ENCODE measurements at regions of chr15 and their contacts with region 1.

Region 1: GRCh38 chr15:40338041-40338657 is 2.6 kb downstream of the CCDC9B start:
- DNase-seq: peak; percentile 66 to 72
- ATAC-seq: peak; percentile 41 to 69; a peak in 4 of 6 replicates
- H3K4me3 ChIP-seq: 0 out of 3 replicates have a peak overlapping the region, but pooled peaks have one; percentile 47
- H3K27ac ChIP-seq: peak overlapping the region; percentile 94 to 96
- H3K4me1 ChIP-seq: peaks cover 39% of the 10 kb centered on the region
- CTCF ChIP-seq: peak; percentile 68
- EP300 ChIP-seq: no peak
- POLR2A ChIP-seq: no peak
- RAD21 ChIP-seq: peak; percentile 53 to 59

Region 2: GRCh38 chr15:40029979-40030893 is 307.9 kb before region 1 on chr15:
- CTCF ChIA-PET with region 1: no interaction called
- POLR2A ChIA-PET with region 1: no interaction called
- DNase-seq: peak in 1 of 2 experiments; percentile 30
- ATAC-seq: peak; percentile 64 to 83; a peak in 4 of 6 replicates
- H3K4me3 ChIP-seq: no peak overlapping the region
- H3K27ac ChIP-seq: no peak overlapping the region
- H3K4me1 ChIP-seq: no peaks in the 10 kb centered on the region
- CTCF ChIP-seq: peak; percentile 39; the same call in 2 of the 3 replicates
- EP300 ChIP-seq: no peak
- POLR2A ChIP-seq: no peak
- RAD21 ChIP-seq: peak in 1 of 2 experiments; percentile 29; a peak in 2 of 5 replicates

Region 3: DNA sequence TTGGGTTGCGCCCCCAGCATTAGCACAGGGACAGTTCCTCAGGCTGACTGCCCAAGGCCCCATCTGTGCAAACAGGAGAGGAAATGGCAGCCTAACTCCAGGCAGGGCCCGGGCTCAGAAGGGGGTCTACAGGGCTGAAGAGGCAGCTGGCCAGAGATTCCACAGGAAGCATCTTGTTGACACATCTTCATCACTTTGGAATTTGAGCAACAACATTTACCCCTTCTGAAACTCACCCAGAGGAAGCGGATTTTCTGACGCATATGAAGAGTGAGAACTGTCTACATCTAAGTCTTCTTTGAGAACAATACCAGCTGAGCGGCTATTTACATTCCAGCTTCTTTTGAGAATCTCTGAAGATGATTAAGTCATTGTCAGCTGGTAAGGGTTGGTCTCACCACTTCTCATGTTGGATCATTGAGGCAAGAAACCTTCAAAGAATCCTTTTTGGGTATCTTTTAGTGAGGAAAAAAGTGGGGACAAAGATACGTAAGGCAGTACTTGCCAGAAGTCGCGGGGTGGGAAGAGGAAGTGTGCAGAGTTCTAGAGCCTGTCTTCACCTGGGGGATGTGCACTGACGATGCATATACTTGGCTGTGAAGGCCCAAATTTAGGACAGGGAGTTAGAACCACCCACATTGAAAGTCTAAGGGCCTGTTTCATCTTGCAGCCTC is 273.8 kb before region 1 on chr15:
- CTCF ChIA-PET with region 1: no interaction called
- POLR2A ChIA-PET with region 1: no interaction called
- DNase-seq: peak in 1 of 2 experiments; percentile 73
- ATAC-seq: peak; percentile 47 to 53; a peak in 4 of 6 replicates
- H3K4me3 ChIP-seq: no peak overlapping the region
- H3K27ac ChIP-seq: peak overlapping the region; percentile 70 to 83
- H3K4me1 ChIP-seq: peaks cover 56% of the 10 kb centered on the region
- CTCF ChIP-seq: no peak
- EP300 ChIP-seq: peak; percentile 38 to 40; a peak in 2 of 5 replicates
- POLR2A ChIP-seq: no peak
- RAD21 ChIP-seq: no peak

Region 4: DNA sequence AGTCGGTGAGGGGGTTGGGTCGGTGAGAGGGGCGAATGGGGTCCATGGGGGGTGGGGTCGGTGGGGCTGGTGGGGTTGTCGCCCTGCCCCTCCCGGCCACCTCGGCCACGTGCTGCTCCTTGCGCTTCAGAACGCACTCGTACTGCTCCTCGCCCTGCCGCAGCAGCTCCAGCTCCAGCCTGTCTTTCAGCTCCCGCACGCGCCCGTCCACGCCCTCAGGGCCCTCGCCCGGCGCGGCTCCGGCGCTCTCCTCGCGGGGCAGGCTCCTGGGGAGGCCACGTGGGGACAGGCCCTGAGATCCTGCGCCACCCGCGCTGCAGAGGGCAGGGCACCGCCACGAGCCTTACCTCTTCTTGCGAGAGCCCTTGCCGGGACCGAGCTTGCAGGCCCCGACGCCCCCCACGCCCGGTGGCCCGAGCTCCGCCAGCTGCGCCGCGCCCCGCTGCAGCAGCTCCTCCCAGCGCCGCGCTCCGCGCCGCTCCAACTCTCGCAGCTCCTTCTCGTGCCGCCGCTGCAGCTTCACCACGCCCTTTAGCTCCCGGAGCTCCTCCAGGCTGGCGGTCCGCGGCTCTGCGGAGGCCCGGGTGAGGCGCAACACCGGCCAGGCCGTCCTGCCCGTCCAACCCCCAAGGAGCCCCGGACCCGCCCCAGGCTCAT is 47.1 kb before region 1 on chr15:
- CTCF ChIA-PET with region 1: interaction called, 17 read pairs
- POLR2A ChIA-PET with region 1: interaction called, 3 read pairs
- DNase-seq: peak; percentile 31 to 38
- ATAC-seq: peak; percentile 67 to 82
- H3K4me3 ChIP-seq: peak overlapping the region; percentile 34
- H3K27ac ChIP-seq: peak overlapping the region; percentile 61 to 87; a peak in 5 of 6 replicates
- H3K4me1 ChIP-seq: peaks cover 11% of the 10 kb centered on the region; the same call in 2 of the 3 replicates
- CTCF ChIP-seq: no peak
- EP300 ChIP-seq: no peak
- POLR2A ChIP-seq: no peak
- RAD21 ChIP-seq: no peak

Region 5: DNA sequence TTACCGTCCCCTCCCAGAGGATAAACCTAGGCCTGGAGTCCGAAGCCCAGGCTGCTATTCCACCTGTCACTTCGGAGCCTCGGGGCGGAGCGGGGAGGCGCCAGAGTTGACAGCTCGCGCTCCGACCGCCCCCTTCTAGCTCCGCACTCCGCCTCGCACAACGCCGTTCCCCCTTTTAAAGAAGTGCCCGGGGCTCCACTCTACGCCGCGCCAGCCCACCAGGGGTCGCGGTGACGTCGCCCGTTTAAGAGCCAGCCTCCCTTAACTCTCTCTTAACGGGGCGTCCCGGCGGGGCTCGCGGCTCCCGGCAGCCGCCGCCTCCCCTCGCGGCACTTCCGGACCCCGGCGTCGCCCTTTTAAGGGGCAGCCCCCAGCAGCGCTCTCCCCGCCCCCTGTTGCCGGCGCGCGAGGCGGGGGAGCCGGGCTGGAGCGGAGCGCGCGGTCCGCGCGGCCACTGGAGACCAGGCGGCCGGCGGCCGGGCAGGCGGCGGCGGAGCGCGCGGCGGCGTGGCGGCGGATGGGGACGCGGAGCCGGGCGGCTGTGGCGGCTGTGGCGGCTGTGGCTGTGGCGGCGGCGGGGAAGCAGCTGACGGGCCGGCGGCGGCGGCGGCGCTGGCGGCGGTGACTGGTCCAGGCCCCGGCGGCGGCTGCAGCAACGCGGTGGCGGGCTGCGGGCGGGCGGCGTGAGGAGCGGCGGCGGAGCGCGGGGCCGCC is 14.8 kb before region 1 on chr15 and contains the start of gene INAFM2:
- CTCF ChIA-PET with region 1: interaction called, 139 read pairs
- POLR2A ChIA-PET with region 1: interaction called, 20 read pairs
- DNase-seq: peak; percentile 66 to 77
- ATAC-seq: peak; percentile 74 to 92
- H3K4me3 ChIP-seq: peak within 1 kb of the TSS; percentile 75
- H3K27ac ChIP-seq: peak within 1 kb of the TSS; percentile 73 to 90
- H3K4me1 ChIP-seq: peaks cover 9% of the 10 kb centered on the region; the same call in 1 of the 3 replicates
- CTCF ChIP-seq: peak; percentile 21; the same call in 2 of the 3 replicates
- EP300 ChIP-seq: no peak
- POLR2A ChIP-seq: 0 out of 2 replicates have a peak, but pooled peaks have one; percentile 17
- RAD21 ChIP-seq: no peak
- polyA plus RNA-seq, gene INAFM2: 2.8 and 3.5 TPM in 2 replicates

Region 6: DNA sequence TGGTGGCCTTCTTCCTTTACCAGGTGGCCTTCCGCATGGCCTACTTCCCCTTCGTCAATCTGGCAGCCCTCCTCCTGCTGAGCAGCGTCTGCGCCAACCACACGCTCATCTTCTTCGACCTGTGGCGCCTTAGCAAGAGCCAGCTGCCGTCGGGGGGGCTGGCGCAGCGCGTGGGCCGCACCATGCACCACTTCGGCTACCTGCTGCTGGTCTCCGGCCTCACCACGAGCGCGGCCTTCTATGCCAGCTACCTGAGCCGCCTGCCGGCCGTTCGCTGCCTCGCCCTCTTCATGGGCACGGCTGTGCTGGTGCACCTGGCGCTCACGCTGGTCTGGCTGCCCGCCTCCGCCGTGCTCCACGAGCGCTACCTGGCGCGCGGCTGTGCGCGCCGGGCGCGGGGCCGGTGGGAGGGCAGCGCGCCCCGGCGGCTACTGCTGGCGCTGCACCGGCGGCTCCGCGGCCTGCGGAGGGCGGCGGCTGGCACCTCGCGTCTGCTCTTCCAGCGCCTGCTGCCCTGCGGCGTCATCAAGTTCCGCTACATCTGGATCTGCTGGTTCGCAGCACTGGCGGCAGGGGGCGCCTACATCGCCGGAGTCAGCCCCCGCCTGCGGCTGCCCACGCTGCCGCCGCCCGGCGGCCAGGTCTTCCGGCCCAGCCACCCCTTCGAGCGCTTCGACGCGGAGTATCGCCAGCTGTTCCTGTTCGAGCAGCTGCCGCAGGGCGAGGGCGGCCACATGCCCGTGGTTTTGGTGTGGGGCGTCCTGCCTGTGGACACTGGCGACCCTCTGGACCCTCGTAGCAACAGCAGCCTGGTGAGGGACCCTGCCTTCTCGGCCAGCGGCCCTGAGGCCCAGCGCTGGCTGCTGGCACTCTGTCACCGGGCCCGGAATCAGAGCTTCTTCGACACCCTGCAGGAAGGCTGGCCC is 29.8 kb after region 1 on chr15:
- CTCF ChIA-PET with region 1: interaction called, 135 read pairs
- POLR2A ChIA-PET with region 1: no interaction called
- DNase-seq: peak; percentile 70 to 87
- ATAC-seq: peak; percentile 88 to 92
- H3K4me3 ChIP-seq: peak overlapping the region; percentile 33
- H3K27ac ChIP-seq: peak overlapping the region; percentile 55 to 87; a peak in 5 of 6 replicates
- H3K4me1 ChIP-seq: 0 out of 3 replicates have a peak, but pooled peaks cover 7% of the 10 kb centered on the region
- CTCF ChIP-seq: peak; percentile 81
- EP300 ChIP-seq: no peak
- POLR2A ChIP-seq: no peak
- RAD21 ChIP-seq: peak; percentile 35 to 62

Region 7: GRCh38 chr15:40388946-40389841 is 51.0 kb after region 1 on chr15:
- CTCF ChIA-PET with region 1: no interaction called
- POLR2A ChIA-PET with region 1: no interaction called
- DNase-seq: no peak
- ATAC-seq: no peak
- H3K4me3 ChIP-seq: no peak overlapping the region
- H3K27ac ChIP-seq: no peak overlapping the region
- H3K4me1 ChIP-seq: peaks cover 7% of the 10 kb centered on the region; the same call in 2 of the 3 replicates
- CTCF ChIP-seq: no peak
- EP300 ChIP-seq: no peak
- POLR2A ChIP-seq: no peak
- RAD21 ChIP-seq: no peak

Region 8: GRCh38 chr15:40481341-40482074 is 143.4 kb after region 1 on chr15:
- CTCF ChIA-PET with region 1: no interaction called
- POLR2A ChIA-PET with region 1: no interaction called
- DNase-seq: no peak
- ATAC-seq: no peak
- H3K4me3 ChIP-seq: no peak overlapping the region
- H3K27ac ChIP-seq: no peak overlapping the region
- H3K4me1 ChIP-seq: no peaks in the 10 kb centered on the region
- CTCF ChIP-seq: no peak
- EP300 ChIP-seq: no peak
- POLR2A ChIP-seq: no peak
- RAD21 ChIP-seq: no peak